ENCODE measurements at regions of chr19 and their contacts with region 1.

Region 1: GRCh38 chr19:3821857-3822364 is 35.7 kb upstream of the MATK start:
- DNase-seq: peak; percentile 87
- H3K4me3 Mint-ChIP-seq: no peak overlapping the region
- H3K27ac Mint-ChIP-seq: peak overlapping the region; percentile 71
- H3K4me1 Mint-ChIP-seq: peaks cover 17% of the 10 kb centered on the region
- H3K27me3 Mint-ChIP-seq: no peaks in the 10 kb centered on the region

Region 2: GRCh38 chr19:3748965-3749364 is 72.9 kb before region 1 on chr19:
- CTCF ChIA-PET with region 1: no interaction called
- POLR2A ChIA-PET with region 1: no interaction called
- DNase-seq: no peak
- H3K4me3 Mint-ChIP-seq: no peak overlapping the region
- H3K27ac Mint-ChIP-seq: no peak overlapping the region
- H3K4me1 Mint-ChIP-seq: no peaks in the 10 kb centered on the region
- H3K27me3 Mint-ChIP-seq: no peaks in the 10 kb centered on the region

Region 3: GRCh38 chr19:3762501-3763459 is 59.1 kb before region 1 on chr19 and contains the start of gene MRPL54:
- CTCF ChIA-PET with region 1: interaction called, 15 read pairs
- POLR2A ChIA-PET with region 1: interaction called, 4 read pairs
- DNase-seq: peak; percentile 99
- H3K4me3 Mint-ChIP-seq: peak within 1 kb of the TSS; percentile 99
- H3K27ac Mint-ChIP-seq: peak within 1 kb of the TSS; percentile 100
- H3K4me1 Mint-ChIP-seq: peaks cover 38% of the 10 kb centered on the region
- H3K27me3 Mint-ChIP-seq: no peaks in the 10 kb centered on the region
- total RNA-seq, gene MRPL54: 78.4 to 81.3 TPM

Region 4: GRCh38 chr19:3783660-3784584 is 38.0 kb before region 1 on chr19:
- CTCF ChIA-PET with region 1: interaction called, 10 read pairs
- POLR2A ChIA-PET with region 1: no interaction called
- DNase-seq: no peak
- H3K4me3 Mint-ChIP-seq: peak overlapping the region; percentile 48
- H3K27ac Mint-ChIP-seq: no peak overlapping the region
- H3K4me1 Mint-ChIP-seq: peaks cover 21% of the 10 kb centered on the region
- H3K27me3 Mint-ChIP-seq: peaks cover 2% of the 10 kb centered on the region

Region 5: DNA sequence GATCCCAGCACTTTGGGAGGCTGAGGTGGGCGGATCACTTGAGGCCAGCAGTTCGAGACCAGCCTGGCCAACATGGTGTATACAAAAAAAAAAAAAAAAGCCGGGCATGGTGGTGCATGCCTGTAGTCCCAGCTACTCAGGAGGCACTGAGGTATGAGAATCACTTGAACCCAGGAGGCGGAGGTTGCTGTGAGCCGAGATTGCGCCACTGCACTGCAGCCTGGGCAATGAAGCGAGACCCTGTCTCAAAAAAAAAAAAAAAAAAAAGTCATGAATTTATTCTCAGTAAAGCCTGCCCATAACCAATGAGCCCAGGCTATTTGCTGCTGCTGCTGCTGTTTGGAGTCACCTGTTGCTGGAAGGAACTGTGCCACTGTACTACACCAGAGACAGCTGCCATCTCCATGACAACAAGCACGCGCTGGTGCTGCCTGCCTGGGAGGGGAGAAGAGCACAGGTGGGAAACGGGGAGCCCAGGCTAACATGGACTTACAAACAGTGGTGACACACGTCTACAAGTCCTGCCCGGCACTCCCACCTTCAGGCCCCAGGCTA is 35.6 kb after region 1 on chr19:
- CTCF ChIA-PET with region 1: no interaction called
- POLR2A ChIA-PET with region 1: no interaction called
- DNase-seq: no peak
- H3K4me3 Mint-ChIP-seq: no peak overlapping the region
- H3K27ac Mint-ChIP-seq: no peak overlapping the region
- H3K4me1 Mint-ChIP-seq: no peaks in the 10 kb centered on the region
- H3K27me3 Mint-ChIP-seq: no peaks in the 10 kb centered on the region

Measured in activated CD4-positive, alpha-beta T cell treated with anti-CD3 and anti-CD28 coated beads, Interleukin-2, amount 10 ng/mL, durations not matched to agents 7 days and 5 days (primary cell).